Activated naive CD4-positive, alpha-beta T cell treated with anti-CD3 and anti-CD28 coated beads for 36 hours (primary cell): ENCODE measurements at regions of chr18 and their contacts with region 1.

Region 1: DNA sequence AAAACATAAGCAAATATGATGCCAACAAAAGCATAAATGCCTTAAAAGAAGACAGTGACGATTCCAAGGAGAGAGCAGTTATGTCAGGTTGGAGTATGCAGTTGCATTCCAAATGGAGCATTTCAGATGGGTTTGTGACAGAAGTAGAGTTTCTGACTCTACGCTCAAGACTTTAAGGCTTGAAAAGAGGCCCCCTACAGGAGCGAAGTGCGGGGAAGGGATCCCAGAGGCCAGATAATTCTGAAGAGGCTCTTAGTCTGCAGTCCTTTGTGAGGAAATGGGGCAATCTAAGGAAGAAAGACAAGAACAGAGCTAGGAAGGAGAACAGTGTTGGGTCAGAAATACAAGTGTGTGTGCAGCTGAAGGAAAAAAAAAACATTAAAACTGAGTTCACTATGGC is 95.5 kb downstream of the ZNF521 start:
- DNase-seq: no peak
- H3K4me3 Mint-ChIP-seq: no peak overlapping the region
- H3K27ac Mint-ChIP-seq: no peak overlapping the region
- H3K4me1 Mint-ChIP-seq: no peaks in the 10 kb centered on the region
- H3K27me3 Mint-ChIP-seq: peaks cover 5% of the 10 kb centered on the region

Region 2: GRCh38 chr18:25192065-25192464 is 64.4 kb before region 1 on chr18:
- CTCF ChIA-PET with region 1: no interaction called
- intact Hi-C with region 1: loop called (anchors 2 kb)
- DNase-seq: no peak
- H3K4me3 Mint-ChIP-seq: no peak overlapping the region
- H3K27ac Mint-ChIP-seq: no peak overlapping the region
- H3K4me1 Mint-ChIP-seq: no peaks in the 10 kb centered on the region
- H3K27me3 Mint-ChIP-seq: no peaks in the 10 kb centered on the region